ENCODE measurements at regions of chr17 and their contacts with region 1.

Region 1: DNA sequence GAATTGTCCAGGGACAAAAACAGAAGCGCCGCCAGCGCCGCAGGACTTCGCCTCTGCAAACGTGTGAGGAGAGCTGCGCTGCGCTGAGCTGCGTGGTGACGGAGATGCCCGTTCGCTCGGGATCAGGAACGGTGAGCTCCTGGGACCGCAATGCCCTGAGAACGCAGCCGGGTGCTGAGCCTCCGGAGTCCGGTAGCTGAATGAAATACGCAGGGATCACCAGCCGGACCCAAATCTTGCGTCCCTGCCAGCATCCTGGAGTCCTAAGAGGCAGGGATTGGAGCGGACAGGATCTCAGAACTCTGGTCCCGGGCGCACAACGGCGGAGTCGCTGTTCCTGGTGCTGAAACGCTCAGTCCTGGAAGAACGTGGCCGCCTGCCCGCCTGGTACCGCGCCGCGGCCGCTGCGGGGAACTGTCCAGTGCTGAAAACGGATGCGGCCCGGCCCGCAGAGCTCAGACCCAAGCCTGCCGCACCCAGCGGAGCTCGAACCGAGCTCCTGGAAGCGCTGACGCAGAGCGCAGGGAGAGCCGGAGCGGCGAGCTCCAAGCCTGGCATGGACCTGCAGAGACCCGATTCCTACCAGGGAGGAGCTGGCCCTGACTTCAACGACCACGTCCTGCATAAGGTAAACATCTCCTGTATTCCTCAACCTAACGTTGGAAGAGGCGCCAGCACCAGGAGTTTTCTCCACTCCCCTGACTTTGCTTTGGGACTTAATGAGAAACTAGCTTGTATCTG is 41.5 kb downstream of the CD300LF start:
- DNase-seq: peak; percentile 82
- ATAC-seq: peak; percentile 99
- H3K4me3 Mint-ChIP-seq: no peak overlapping the region
- H3K27ac Mint-ChIP-seq: no peak overlapping the region
- H3K4me1 Mint-ChIP-seq: no peaks in the 10 kb centered on the region
- H3K27me3 Mint-ChIP-seq: peaks cover 54% of the 10 kb centered on the region
- CTCF ChIP-seq: no peak

Region 2: GRCh38 chr17:74654742-74655141 is 16.5 kb before region 1 on chr17:
- CTCF ChIA-PET with region 1: interaction called, 22 read pairs
- POLR2A ChIA-PET with region 1: no interaction called
- intact Hi-C with region 1: no loop called
- DNase-seq: no peak
- ATAC-seq: no peak
- H3K4me3 Mint-ChIP-seq: no peak overlapping the region
- H3K27ac Mint-ChIP-seq: no peak overlapping the region
- H3K4me1 Mint-ChIP-seq: peaks cover 3% of the 10 kb centered on the region
- H3K27me3 Mint-ChIP-seq: peaks cover 16% of the 10 kb centered on the region
- CTCF ChIP-seq: no peak

Region 3: GRCh38 chr17:74690409-74690825 is 19.2 kb after region 1 on chr17:
- CTCF ChIA-PET with region 1: no interaction called
- POLR2A ChIA-PET with region 1: no interaction called
- intact Hi-C with region 1: no loop called
- DNase-seq: no peak
- ATAC-seq: no peak
- H3K4me3 Mint-ChIP-seq: no peak overlapping the region
- H3K27ac Mint-ChIP-seq: peak overlapping the region; percentile 43
- H3K4me1 Mint-ChIP-seq: peaks cover 4% of the 10 kb centered on the region
- H3K27me3 Mint-ChIP-seq: peaks cover 2% of the 10 kb centered on the region
- CTCF ChIP-seq: no peak